Activated CD4-positive, alpha-beta T cell treated with anti-CD3 and anti-CD28 coated beads for 36 hours (primary cell): ENCODE measurements at regions of chr10 and their contacts with region 1.

Region 1: DNA sequence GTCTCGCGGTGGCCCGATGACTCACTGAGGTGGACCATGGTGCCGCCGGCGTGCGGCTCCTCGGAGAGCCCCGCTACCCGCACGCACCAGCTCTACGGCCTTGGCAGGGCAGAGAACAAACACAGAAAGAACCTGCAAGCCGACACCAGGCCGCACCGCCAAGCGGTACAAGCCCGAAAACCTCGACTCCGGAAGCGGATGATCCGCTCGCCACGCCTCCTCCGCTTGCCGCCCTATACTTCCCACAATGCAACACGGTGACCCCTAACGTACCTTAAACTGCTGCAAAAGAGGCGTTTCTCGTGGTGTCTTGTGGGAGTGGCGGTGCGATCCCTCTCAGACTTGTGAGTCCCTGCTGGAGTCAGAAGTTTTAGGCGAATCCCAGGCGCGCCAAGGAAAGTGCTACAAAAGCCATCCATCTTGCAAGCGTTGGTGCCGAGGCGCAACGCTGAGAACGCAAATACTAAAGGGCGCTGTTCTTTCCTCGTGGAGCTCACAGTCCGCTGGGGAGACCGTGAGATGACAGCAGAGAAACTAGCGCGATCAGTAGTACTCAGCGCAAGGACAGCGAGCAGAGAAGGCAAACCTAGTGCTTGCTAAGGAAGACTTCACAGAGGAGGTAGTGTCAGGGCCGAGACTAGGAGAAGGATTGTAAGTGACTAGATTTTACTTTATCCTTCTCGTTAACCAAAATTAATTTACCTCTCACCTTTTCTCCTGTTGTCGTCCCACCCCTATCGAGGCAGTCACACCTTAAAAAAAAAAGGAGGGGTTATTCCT is at the start of gene MRPS16:
- DNase-seq: peak; percentile 95
- ATAC-seq: peak; percentile 84
- H3K4me3 Mint-ChIP-seq: peak within 1 kb of the TSS; percentile 94
- H3K27ac Mint-ChIP-seq: peak within 1 kb of the TSS; percentile 98
- H3K4me1 Mint-ChIP-seq: peaks cover 32% of the 10 kb centered on the region
- H3K27me3 Mint-ChIP-seq: no peaks in the 10 kb centered on the region
- total RNA-seq, gene MRPS16: 123 to 138 TPM

Region 2: GRCh38 chr10:73263948-73264347 is 11.3 kb after region 1 on chr10:
- CTCF ChIA-PET with region 1: interaction called, 16 read pairs
- POLR2A ChIA-PET with region 1: interaction called, 3 read pairs
- intact Hi-C with region 1: no loop called
- DNase-seq: peak; percentile 7
- ATAC-seq: no peak
- H3K4me3 Mint-ChIP-seq: no peak overlapping the region
- H3K27ac Mint-ChIP-seq: no peak overlapping the region
- H3K4me1 Mint-ChIP-seq: peaks cover 3% of the 10 kb centered on the region
- H3K27me3 Mint-ChIP-seq: no peaks in the 10 kb centered on the region

Region 3: DNA sequence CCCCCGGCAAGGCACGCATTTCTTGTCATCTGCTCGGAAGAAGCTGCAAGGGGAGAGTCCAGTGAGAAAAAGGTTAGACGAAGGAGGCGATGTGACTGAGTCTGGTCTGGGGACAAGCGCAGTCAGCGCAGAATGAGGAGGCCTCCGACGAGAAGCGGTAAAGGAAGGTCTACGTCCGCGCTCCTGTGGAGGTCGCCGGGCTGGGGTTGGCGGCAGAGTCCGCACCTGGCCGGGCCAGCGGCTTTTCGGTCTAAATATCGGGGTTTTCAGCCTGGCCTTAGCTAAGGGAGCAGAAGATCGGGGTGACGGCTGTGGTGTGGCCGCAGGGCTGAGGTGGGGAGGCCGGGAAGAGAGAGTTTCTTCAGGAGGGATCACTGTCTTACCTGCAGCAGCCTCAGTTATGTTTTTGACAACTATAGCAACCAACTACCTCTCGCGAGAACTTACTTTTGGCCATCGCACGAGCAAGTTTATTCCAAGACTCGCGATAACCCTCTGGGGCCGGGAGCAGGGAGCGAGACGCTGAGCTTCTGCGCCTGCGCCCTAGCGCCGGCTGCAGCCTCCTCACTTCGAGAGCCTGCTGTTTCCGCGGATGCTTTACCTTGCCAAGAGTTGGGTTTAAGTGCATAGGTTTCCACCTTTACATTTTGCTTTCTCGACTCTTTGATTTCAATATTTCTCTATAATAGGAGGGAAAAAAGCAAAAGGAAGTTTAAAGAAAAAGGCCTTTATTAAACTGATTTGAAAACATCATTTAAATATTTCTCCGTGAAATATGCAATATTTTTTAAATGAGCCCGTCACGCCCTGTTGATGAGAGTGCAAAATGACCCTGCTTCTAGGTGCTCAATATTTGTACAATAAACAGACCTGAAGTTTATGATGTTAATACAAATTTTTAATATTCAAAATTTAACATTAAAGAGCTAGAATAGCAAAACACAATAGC is 106.0 kb after region 1 on chr10 and contains the start of gene CFAP70:
- CTCF ChIA-PET with region 1: no interaction called
- POLR2A ChIA-PET with region 1: no interaction called
- intact Hi-C with region 1: loop called (anchors 1 to 2 kb)
- DNase-seq: peak; percentile 96
- ATAC-seq: peak; percentile 100
- H3K4me3 Mint-ChIP-seq: peak within 1 kb of the TSS; percentile 97
- H3K27ac Mint-ChIP-seq: peak within 1 kb of the TSS; percentile 84
- H3K4me1 Mint-ChIP-seq: peaks cover 14% of the 10 kb centered on the region
- H3K27me3 Mint-ChIP-seq: no peaks in the 10 kb centered on the region
- total RNA-seq, gene CFAP70: 0.58 to 0.71 TPM

Region 4: DNA sequence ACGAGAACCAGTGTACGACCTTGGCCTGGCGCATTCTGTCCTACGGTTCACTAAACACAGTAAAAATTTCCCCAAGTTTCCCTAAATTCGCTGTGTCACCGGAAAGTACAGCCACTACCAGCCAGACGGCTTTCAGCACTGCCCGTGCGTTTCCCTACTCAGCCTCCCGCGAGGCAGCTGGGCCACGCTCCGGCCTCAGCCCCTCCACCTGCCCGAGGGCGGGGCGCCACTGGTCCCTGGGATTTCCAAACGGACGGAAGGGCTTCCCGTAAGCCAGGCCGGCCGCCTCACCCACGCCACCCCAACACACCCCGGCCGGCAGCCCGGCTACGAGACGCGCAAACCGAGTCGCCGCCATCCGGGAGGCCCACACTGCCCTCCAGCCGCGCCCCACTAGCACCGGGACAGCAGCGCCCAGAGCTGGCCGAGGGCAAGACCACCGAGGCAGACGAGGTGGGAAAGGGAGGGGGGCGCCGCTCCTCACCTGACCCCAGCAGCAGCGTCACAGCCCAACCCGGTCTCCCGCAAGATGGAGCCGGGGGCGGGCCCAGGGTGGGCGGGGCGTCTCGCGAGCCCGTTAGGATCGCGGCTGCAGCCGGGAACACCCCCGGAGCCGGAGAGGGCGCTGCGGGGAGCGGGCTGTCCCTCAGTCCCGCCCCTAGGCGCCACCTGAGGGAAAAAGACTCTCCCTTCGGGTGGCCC is 161.0 kb after region 1 on chr10 and contains the start of gene ANXA7:
- CTCF ChIA-PET with region 1: no interaction called
- POLR2A ChIA-PET with region 1: interaction called, 4 read pairs
- intact Hi-C with region 1: loop called (anchors 1 to 2 kb)
- DNase-seq: peak; percentile 97
- ATAC-seq: peak; percentile 96
- H3K4me3 Mint-ChIP-seq: peak within 1 kb of the TSS; percentile 94
- H3K27ac Mint-ChIP-seq: peak within 1 kb of the TSS; percentile 93
- H3K4me1 Mint-ChIP-seq: peaks cover 52% of the 10 kb centered on the region
- H3K27me3 Mint-ChIP-seq: peaks cover 3% of the 10 kb centered on the region
- total RNA-seq, gene ANXA7: 94.6 to 118 TPM

Region 5: GRCh38 chr10:73480158-73480557 is 227.5 kb after region 1 on chr10:
- CTCF ChIA-PET with region 1: no interaction called
- POLR2A ChIA-PET with region 1: no interaction called
- intact Hi-C with region 1: loop called in 1 of 2 experiments (anchors 5 kb)
- DNase-seq: no peak
- ATAC-seq: peak; percentile 81
- H3K4me3 Mint-ChIP-seq: no peak overlapping the region
- H3K27ac Mint-ChIP-seq: no peak overlapping the region
- H3K4me1 Mint-ChIP-seq: peaks cover 31% of the 10 kb centered on the region
- H3K27me3 Mint-ChIP-seq: no peaks in the 10 kb centered on the region